Activated CD4-positive, alpha-beta T cell treated with anti-CD3 and anti-CD28 coated beads, Interleukin-2, amount 10 ng/mL, durations not matched to agents 24 days and 14 days (primary cell): ENCODE measurements at regions of chr16 and their contacts with region 1.

Region 1: GRCh38 chr16:57422026-57422944 is 17.7 kb downstream of the CCL17 start:
- DNase-seq: no peak
- H3K4me3 Mint-ChIP-seq: no peak overlapping the region
- H3K27ac Mint-ChIP-seq: no peak overlapping the region
- H3K4me1 Mint-ChIP-seq: peaks cover 8% of the 10 kb centered on the region
- H3K27me3 Mint-ChIP-seq: peaks cover 2% of the 10 kb centered on the region

Region 2: GRCh38 chr16:57435838-57436237 is 13.6 kb after region 1 on chr16:
- intact Hi-C with region 1: no loop called
- DNase-seq: no peak
- H3K4me3 Mint-ChIP-seq: no peak overlapping the region
- H3K27ac Mint-ChIP-seq: peak overlapping the region; percentile 8
- H3K4me1 Mint-ChIP-seq: no peaks in the 10 kb centered on the region
- H3K27me3 Mint-ChIP-seq: no peaks in the 10 kb centered on the region

Region 3: GRCh38 chr16:57447186-57447962 is 25.1 kb after region 1 on chr16 and contains the starts of genes CIAPIN1 and COQ9:
- intact Hi-C with region 1: loop called (anchors 2 kb)
- DNase-seq: peak; percentile 98
- H3K4me3 Mint-ChIP-seq: peak within 1 kb of the TSS; percentile 95
- H3K27ac Mint-ChIP-seq: peak within 1 kb of the TSS; percentile 92
- H3K4me1 Mint-ChIP-seq: peaks cover 24% of the 10 kb centered on the region
- H3K27me3 Mint-ChIP-seq: no peaks in the 10 kb centered on the region
- total RNA-seq, gene CIAPIN1: 85.4 TPM in 2 replicates
- total RNA-seq, gene COQ9: 55.2 and 56.7 TPM in 2 replicates